ENCODE measurements at regions of chr5 and their contacts with region 1.

Region 1: GRCh38 chr5:141618804-141619554 is at the start of gene DIAPH1:
- DNase-seq: peak; percentile 99
- H3K27ac ChIP-seq: peak within 1 kb of the TSS; percentile 95
- CTCF ChIP-seq: peak; percentile 99

Region 2: GRCh38 chr5:141590127-141590526 is 28.9 kb before region 1 on chr5:
- CTCF ChIA-PET with region 1: interaction called, 107 read pairs
- POLR2A ChIA-PET with region 1: interaction called, 14 read pairs
- DNase-seq: no peak
- H3K27ac ChIP-seq: no peak overlapping the region
- CTCF ChIP-seq: no peak

Region 3: DNA sequence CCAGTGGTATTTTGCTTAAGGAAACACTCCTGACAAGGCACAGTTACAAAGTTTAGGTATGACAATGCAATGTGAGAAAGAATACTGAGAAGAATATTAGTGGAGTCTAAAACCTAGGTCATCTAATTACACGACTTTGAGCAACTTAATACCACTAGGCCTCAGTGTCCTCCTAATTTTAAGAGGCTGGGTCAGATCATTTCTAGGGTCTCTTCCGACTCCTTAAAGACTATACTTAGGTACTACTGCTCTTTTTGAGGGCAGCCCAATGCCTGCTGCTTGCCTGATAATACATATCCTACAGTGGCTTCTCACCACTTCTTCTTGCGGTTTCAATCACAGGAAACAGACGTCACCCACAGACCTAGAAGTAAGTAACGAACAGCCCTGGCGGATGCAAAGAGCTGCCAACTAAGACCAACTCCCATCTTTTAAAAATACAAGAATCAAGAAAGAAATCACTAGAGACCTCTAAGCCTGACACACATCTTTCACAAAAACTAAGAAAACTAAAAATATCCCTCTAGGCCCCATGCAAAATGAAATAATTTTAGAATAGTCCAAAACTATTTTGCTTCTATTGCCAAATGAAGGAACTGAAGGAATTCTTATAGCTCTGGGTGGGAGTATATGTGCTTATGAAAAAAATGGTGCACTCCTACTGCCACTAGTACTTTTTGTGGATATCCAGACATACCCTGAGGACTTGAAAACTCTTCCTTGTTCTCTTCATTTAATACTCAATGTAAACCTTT is 13.3 kb before region 1 on chr5:
- CTCF ChIA-PET with region 1: interaction called, 15 read pairs
- POLR2A ChIA-PET with region 1: interaction called, 4 read pairs
- DNase-seq: no peak
- H3K27ac ChIP-seq: peak overlapping the region; percentile 61; the same call in 1 of the 2 replicates
- CTCF ChIP-seq: no peak

Region 4: GRCh38 chr5:141636413-141637122 is 17.6 kb after region 1 on chr5 and contains the starts of genes HDAC3 and RELL2:
- CTCF ChIA-PET with region 1: interaction called, 29 read pairs
- POLR2A ChIA-PET with region 1: interaction called, 4 read pairs
- DNase-seq: peak; percentile 98
- H3K27ac ChIP-seq: peak within 1 kb of the TSS; percentile 73
- CTCF ChIP-seq: no peak

Region 5: GRCh38 chr5:141664732-141665461 is 45.9 kb after region 1 on chr5:
- CTCF ChIA-PET with region 1: interaction called, 16 read pairs
- POLR2A ChIA-PET with region 1: no interaction called
- DNase-seq: peak; percentile 73
- H3K27ac ChIP-seq: no peak overlapping the region
- CTCF ChIP-seq: peak; percentile 96

Region 6: DNA sequence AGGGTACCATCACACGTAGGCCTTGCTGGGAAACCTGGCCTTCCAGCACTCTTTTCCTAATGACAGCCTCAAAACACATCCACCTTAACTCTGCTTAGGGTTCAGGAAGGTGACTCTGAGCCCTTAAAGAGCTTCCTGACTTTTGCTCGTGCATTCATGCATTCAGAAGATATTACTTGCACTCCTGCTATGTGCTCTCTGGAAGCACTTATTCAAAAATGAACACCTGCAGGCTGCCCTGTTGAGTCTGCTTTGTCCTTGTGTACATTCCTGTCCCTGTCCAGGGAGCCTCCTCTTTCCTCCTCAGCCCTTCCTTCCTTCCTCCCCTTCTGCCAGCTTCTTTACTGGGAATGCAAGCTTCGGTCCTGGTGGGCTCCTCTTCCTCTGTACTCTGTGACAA is 644.4 kb after region 1 on chr5:
- CTCF ChIA-PET with region 1: no interaction called
- POLR2A ChIA-PET with region 1: no interaction called
- DNase-seq: no peak
- H3K27ac ChIP-seq: no peak overlapping the region
- CTCF ChIP-seq: no peak